ENCODE measurements at regions of chr6 and their contacts with region 1.

Region 1: GRCh38 chr6:104084705-104085104 is 775.0 kb downstream of the HACE1 start:
- DNase-seq: no peak
- H3K4me3 ChIP-seq: no peak overlapping the region
- H3K27ac ChIP-seq: no peak overlapping the region
- H3K4me1 ChIP-seq: no peaks in the 10 kb centered on the region
- H3K27me3 ChIP-seq: no peaks in the 10 kb centered on the region
- CTCF ChIP-seq: no peak

Region 2: GRCh38 chr6:103895136-103895535 is 189.6 kb before region 1 on chr6:
- CTCF ChIA-PET with region 1: no interaction called
- POLR2A ChIA-PET with region 1: no interaction called
- intact Hi-C with region 1: no loop called
- DNase-seq: no peak
- H3K4me3 ChIP-seq: no peak overlapping the region
- H3K27ac ChIP-seq: no peak overlapping the region
- H3K4me1 ChIP-seq: no peaks in the 10 kb centered on the region
- H3K27me3 ChIP-seq: no peaks in the 10 kb centered on the region
- CTCF ChIP-seq: no peak

Region 3: DNA sequence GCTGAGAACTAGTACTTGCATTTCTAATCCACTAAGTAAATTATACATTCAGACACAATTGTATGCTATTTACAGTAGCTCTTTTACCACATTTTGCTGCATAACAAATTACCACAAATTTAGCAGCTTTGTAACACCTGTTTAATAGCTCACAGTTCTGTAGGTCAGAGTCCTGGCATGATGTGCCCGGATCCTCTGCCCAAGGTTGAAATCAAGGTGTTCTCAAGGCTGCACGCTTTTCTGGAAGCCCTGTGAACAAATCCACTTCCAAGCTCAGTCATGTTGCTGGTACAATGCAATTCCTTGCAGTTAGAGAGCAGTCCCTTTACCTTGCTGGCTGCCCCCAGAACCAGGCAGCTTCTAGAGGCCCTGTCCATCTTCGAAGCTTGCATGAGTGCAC is 59.1 kb after region 1 on chr6:
- CTCF ChIA-PET with region 1: no interaction called
- POLR2A ChIA-PET with region 1: interaction called, 13 read pairs
- intact Hi-C with region 1: no loop called
- DNase-seq: no peak
- H3K4me3 ChIP-seq: no peak overlapping the region
- H3K27ac ChIP-seq: no peak overlapping the region
- H3K4me1 ChIP-seq: no peaks in the 10 kb centered on the region
- H3K27me3 ChIP-seq: no peaks in the 10 kb centered on the region
- CTCF ChIP-seq: no peak